ENCODE measurements at regions of chr11 and their contacts with region 1.

Region 1: GRCh38 chr11:13210424-13210823 is 67.2 kb upstream of the BMAL1 start:
- DNase-seq: peak; percentile 72 to 88
- ATAC-seq: peak; percentile 85 to 90
- H3K4me3 ChIP-seq: no peak overlapping the region
- H3K27ac ChIP-seq: peak overlapping the region; percentile 6 to 64; a peak in 3 of 6 replicates
- H3K4me1 ChIP-seq: peaks cover 35% of the 10 kb centered on the region
- CTCF ChIP-seq: peak; percentile 95
- EP300 ChIP-seq: no peak
- POLR2A ChIP-seq: no peak
- RAD21 ChIP-seq: peak; percentile 99

Region 2: DNA sequence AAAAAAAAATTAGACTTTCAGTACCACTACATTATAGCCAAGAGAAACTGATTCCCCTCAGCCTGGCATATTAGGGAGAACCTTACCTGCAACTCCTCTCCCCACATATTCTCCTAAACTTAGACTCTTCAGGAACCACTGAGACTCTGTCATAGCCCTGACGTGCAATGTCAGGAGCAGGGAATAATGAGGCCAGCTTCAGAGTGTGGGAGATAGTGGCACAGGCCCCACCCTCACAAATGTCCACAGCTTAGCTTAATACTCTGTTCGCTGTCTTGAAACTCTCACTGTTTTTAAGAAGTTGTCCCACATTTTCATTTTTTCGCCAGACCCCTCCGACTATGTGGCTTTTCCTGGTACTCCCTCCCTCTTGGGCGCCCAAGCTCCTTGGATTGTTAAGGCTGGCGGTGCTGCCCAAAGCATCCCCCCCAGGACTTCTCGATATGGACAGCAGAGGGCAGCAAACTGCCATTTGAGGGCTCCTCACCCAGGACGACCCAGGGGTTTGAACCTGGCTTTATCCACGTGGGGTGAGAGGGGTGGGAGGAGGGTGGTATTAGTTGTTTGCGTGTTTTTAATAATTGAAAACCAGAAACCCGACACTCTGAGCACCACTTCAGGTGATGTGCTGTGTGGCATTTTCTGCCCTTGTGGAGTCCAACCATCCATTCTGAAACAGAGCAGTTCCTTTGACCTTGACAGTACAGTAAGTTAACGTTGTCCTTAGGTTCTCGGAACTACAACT is 246.5 kb before region 1 on chr11:
- CTCF ChIA-PET with region 1: interaction called, 10 read pairs
- POLR2A ChIA-PET with region 1: no interaction called
- DNase-seq: peak; percentile 70 to 91
- ATAC-seq: peak; percentile 88 to 98
- H3K4me3 ChIP-seq: no peak overlapping the region
- H3K27ac ChIP-seq: peak overlapping the region; percentile 43 to 70; a peak in 4 of 6 replicates
- H3K4me1 ChIP-seq: peaks cover 14% of the 10 kb centered on the region
- CTCF ChIP-seq: peak; percentile 91
- EP300 ChIP-seq: no peak
- POLR2A ChIP-seq: no peak
- RAD21 ChIP-seq: peak; percentile 98 to 99

Region 3: DNA sequence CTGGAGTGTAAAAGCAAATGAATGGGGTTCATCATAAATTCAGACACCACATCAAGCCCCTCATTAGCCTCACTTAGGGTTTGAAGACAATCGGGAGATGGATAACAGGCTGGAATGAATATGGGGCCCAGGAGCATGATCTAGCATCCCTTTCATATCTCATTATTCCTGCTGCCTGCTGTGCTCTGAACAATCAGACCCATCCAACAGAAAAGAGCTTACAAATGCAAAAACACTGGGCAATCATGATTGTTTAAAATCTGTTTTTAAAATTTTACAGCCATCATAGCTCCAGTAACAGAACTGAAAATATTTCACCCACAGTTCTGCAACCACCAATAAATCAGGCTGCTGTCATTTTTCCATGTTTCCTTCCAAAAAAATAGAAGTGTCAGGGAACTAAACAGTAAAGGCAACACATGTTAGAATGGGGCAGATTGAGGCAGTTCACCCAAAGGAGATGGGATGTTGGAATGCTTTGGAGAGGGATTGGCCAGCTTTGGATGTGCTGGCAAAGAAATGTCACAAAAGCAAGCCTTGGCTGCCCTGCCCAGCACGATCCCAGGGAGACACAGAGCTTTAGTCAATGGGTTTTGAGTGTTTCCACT is 19.4 kb after region 1 on chr11:
- CTCF ChIA-PET with region 1: interaction called, 44 read pairs
- POLR2A ChIA-PET with region 1: no interaction called
- DNase-seq: no peak
- ATAC-seq: no peak
- H3K4me3 ChIP-seq: no peak overlapping the region
- H3K27ac ChIP-seq: no peak overlapping the region
- H3K4me1 ChIP-seq: no peaks in the 10 kb centered on the region
- CTCF ChIP-seq: no peak
- EP300 ChIP-seq: no peak
- POLR2A ChIP-seq: no peak
- RAD21 ChIP-seq: no peak

Region 4: GRCh38 chr11:13256216-13256615 is 45.8 kb after region 1 on chr11:
- CTCF ChIA-PET with region 1: interaction called, 30 read pairs
- POLR2A ChIA-PET with region 1: interaction called, 7 read pairs
- DNase-seq: no peak
- ATAC-seq: no peak
- H3K4me3 ChIP-seq: no peak overlapping the region
- H3K27ac ChIP-seq: no peak overlapping the region
- H3K4me1 ChIP-seq: peaks cover 17% of the 10 kb centered on the region
- CTCF ChIP-seq: no peak
- EP300 ChIP-seq: no peak
- POLR2A ChIP-seq: no peak
- RAD21 ChIP-seq: no peak

Region 5: DNA sequence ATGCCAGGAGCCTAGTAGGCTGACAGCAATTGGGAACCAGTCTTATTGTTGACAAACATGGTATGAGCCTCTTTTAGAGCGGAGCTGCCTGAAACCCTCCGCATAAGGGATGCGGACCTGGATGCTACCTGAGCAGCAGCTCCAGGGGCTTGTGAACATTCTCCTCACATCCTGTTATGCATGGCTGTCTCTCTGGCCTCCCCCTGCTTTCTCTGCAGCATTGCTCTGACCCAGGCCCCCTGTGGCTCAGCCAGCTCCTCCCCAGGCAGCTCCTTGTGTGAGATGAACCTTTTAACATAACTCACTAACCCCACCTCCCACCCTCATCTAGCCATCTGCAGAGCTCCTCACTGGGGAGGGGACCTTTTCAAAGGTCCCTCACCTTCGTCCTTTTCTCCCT is 73.2 kb after region 1 on chr11:
- CTCF ChIA-PET with region 1: interaction called, 13 read pairs
- POLR2A ChIA-PET with region 1: interaction called, 8 read pairs
- DNase-seq: no peak
- ATAC-seq: no peak
- H3K4me3 ChIP-seq: no peak overlapping the region
- H3K27ac ChIP-seq: no peak overlapping the region
- H3K4me1 ChIP-seq: peaks cover 46% of the 10 kb centered on the region
- CTCF ChIP-seq: no peak
- EP300 ChIP-seq: no peak
- POLR2A ChIP-seq: no peak
- RAD21 ChIP-seq: no peak

Region 6: GRCh38 chr11:13335319-13335718 is 124.9 kb after region 1 on chr11:
- CTCF ChIA-PET with region 1: interaction called, 320 read pairs
- POLR2A ChIA-PET with region 1: interaction called, 32 read pairs
- DNase-seq: peak; percentile 71 to 76
- ATAC-seq: peak in 1 of 2 experiments; percentile 21; a peak in 3 of 6 replicates
- H3K4me3 ChIP-seq: no peak overlapping the region
- H3K27ac ChIP-seq: peak overlapping the region; percentile 87 to 95
- H3K4me1 ChIP-seq: peaks cover 83% of the 10 kb centered on the region
- CTCF ChIP-seq: peak; percentile 77
- EP300 ChIP-seq: no peak
- POLR2A ChIP-seq: no peak
- RAD21 ChIP-seq: peak; percentile 78 to 87

Region 7: GRCh38 chr11:13367115-13367514 is 156.7 kb after region 1 on chr11:
- CTCF ChIA-PET with region 1: interaction called, 10 read pairs
- POLR2A ChIA-PET with region 1: no interaction called
- DNase-seq: peak in 1 of 2 experiments; percentile 8
- ATAC-seq: peak; percentile 54 to 58; a peak in 3 of 6 replicates
- H3K4me3 ChIP-seq: no peak overlapping the region
- H3K27ac ChIP-seq: no peak overlapping the region
- H3K4me1 ChIP-seq: peaks cover 6% of the 10 kb centered on the region; the same call in 1 of the 3 replicates
- CTCF ChIP-seq: no peak
- EP300 ChIP-seq: no peak
- POLR2A ChIP-seq: no peak
- RAD21 ChIP-seq: no peak

Region 8: DNA sequence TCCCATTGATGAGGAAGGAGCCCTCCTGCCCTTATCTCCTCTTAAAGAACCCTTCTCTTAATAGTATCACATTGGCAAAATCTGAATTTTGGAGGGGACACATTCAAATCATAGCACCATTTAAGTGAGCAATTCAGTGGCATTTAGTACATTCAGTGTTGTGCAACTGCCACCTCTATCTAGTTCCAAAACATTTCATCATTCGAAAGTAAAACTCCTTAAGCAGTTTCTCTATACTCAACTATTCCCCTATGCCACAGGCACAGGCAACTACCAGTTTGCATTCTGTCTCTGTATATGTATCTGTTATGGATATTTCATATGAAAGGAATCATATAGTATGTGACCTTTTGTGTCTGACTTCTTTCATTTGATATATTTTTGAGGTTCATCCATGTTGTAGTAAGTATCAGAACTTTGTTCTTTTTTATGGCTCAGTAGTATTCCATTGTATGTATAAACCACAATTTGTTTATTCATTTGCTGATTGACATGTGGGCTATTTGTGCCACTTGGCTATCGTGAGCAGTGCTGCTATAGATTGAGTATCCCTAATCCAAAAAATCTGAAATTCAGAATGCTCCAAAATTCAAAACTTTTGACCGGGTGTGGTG is 481.0 kb after region 1 on chr11:
- CTCF ChIA-PET with region 1: no interaction called
- POLR2A ChIA-PET with region 1: no interaction called
- DNase-seq: no peak
- ATAC-seq: no peak
- H3K4me3 ChIP-seq: no peak overlapping the region
- H3K27ac ChIP-seq: no peak overlapping the region
- H3K4me1 ChIP-seq: no peaks in the 10 kb centered on the region
- CTCF ChIP-seq: no peak
- EP300 ChIP-seq: no peak
- POLR2A ChIP-seq: no peak
- RAD21 ChIP-seq: no peak